Naive thymus-derived CD4-positive, alpha-beta T cell (primary cell): ENCODE measurements at regions of chr15 and their contacts with region 1.

Region 1: DNA sequence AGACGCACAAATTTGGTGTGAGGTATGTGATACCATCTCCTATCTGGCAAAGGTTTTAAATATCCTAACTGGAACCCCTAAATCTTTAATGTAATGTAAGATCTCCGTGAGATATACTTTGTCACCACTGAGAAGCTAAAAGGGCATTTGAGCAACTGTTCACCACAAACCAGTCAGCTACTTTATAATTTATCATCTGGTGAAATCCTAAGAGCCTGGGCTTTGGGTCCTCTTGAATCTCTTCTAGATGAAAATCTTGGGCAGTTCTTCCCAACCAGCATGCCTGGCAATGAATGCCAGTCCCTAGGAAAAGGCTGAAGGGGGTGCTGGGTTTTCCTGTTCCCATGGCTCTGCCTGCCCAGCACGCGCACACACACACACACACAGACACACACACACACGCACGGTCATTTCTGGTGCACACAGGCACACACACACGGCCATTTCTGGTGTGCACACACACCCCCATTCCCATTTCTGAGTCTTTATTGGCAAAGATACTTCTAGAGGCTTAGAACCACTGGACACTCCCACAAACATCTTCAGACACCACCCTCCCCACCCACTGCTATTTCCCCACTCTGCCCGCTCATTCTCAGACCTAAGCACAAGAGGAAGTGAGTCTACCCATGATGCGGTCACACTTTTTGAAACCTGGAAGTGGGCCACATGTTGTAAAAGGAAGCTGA is 72.6 kb downstream of the MYO1E start:
- DNase-seq: peak; percentile 17 to 74 (median 66)
- ATAC-seq: peak; percentile 97
- H3K4me3 ChIP-seq: peak overlapping the region; percentile 36
- H3K4me3 Mint-ChIP-seq: peak overlapping the region; percentile 63 to 87 (median 73)
- H3K27ac ChIP-seq: no peak overlapping the region
- H3K27ac Mint-ChIP-seq: peak overlapping the region; percentile 8 to 85 (median 74)
- H3K4me1 ChIP-seq: peaks cover 14 to 24% of the 10 kb centered on the region in 2 donors
- H3K4me1 Mint-ChIP-seq: peaks cover 19 to 65% (median 38%) of the 10 kb centered on the region in 7 donors
- H3K27me3 ChIP-seq: no peaks in the 10 kb centered on the region
- H3K27me3 Mint-ChIP-seq: no peaks in the 10 kb centered on the region

Region 2: DNA sequence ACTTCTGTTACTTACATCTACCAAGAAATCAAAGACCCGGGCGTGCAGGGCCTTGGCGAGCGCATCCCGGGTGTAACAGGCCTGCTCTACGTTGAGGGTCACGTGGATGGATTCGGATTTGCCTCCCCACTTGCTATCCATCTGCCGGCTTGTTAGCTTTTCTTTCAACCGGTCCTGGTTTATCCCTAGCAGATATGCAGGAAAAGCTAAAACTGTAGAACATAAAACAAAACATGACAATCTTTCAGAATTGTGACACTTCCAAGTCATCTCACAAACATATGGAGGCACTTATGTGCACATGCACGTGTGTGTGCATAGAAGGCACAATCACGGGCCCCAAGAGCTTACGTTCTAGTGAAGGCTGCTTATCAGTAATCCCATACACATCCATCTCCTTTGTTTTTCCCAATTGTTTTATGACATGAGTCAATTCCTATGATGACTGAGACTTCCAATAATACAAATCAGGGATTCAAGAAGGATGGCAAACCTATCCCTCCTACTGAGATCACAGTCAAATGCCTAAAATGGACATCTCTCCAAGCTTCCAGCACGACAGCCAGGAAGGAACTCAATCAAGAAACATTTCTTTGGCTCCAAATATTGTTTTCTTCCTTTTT is 82.1 kb before region 1 on chr15:
- CTCF ChIA-PET with region 1: no interaction called
- POLR2A ChIA-PET with region 1: no interaction called
- intact Hi-C with region 1: no loop called
- DNase-seq: no peak
- ATAC-seq: no peak
- H3K4me3 ChIP-seq: no peak overlapping the region
- H3K4me3 Mint-ChIP-seq: no peak overlapping the region
- H3K27ac ChIP-seq: no peak overlapping the region
- H3K27ac Mint-ChIP-seq: no peak overlapping the region
- H3K4me1 ChIP-seq: no peaks in the 10 kb centered on the region
- H3K4me1 Mint-ChIP-seq: peaks cover 0 to 6% (median 0%) of the 10 kb centered on the region in 7 donors
- H3K27me3 ChIP-seq: no peaks in the 10 kb centered on the region
- H3K27me3 Mint-ChIP-seq: peaks cover 0 to 7% (median 0%) of the 10 kb centered on the region in 5 donors

Region 3: DNA sequence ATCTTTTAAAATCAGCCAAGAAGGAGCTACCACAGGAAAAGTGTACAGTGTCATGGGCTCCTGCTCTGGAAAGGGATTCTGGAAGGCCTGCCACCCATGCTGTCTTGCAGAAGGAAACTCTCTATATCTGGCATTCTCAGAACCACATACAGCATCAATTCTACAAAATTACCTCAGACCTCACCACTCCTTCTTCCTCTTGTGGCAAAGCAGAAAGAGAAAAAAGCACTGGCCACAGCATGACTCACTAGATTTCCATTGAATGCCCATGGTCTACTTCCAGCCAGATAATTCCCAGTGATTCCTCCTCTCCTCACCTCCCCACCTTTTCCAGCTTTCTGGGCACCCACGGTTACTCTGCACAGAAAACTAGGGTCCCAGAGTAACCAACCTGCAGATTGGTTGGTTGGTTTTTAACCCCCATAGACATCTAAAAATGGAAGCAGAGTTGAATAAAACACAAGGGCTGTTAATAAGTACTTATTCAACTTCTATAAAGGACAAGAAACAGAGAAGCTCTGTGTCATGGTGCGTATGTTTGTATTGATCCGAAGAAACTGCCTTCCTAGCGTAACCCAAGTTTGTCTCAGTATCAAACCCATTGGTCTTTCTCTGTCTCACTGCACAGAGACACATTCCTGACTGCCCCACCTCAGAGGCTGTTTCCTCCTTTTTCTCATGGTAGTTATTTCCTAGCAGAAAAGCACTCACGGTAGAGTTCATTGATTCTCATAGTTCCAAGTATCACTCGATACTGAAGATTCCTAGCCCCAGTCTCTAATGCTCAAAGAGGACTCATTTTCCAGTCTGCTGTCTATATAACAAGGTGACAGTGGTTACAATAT is 25.7 kb before region 1 on chr15:
- CTCF ChIA-PET with region 1: no interaction called
- POLR2A ChIA-PET with region 1: no interaction called
- intact Hi-C with region 1: loop called in 1 of 2 experiments (anchors 1 kb)
- DNase-seq: no peak
- ATAC-seq: peak; percentile 40
- H3K4me3 ChIP-seq: no peak overlapping the region
- H3K4me3 Mint-ChIP-seq: peak overlapping the region in 1 of 10 donors; percentile 72
- H3K27ac ChIP-seq: no peak overlapping the region
- H3K27ac Mint-ChIP-seq: peak overlapping the region in 1 of 9 donors; percentile 86
- H3K4me1 ChIP-seq: no peaks in the 10 kb centered on the region
- H3K4me1 Mint-ChIP-seq: peaks cover 0 to 66% (median 0%) of the 10 kb centered on the region in 7 donors
- H3K27me3 ChIP-seq: no peaks in the 10 kb centered on the region
- H3K27me3 Mint-ChIP-seq: peaks cover 0 to 12% (median 0%) of the 10 kb centered on the region in 5 donors

Region 4: GRCh38 chr15:59349680-59350420 is 49.8 kb after region 1 on chr15:
- CTCF ChIA-PET with region 1: no interaction called
- POLR2A ChIA-PET with region 1: no interaction called
- intact Hi-C with region 1: loop called in 1 of 2 experiments (anchors 10 kb)
- DNase-seq: no peak
- ATAC-seq: peak; percentile 68
- H3K4me3 ChIP-seq: no peak overlapping the region
- H3K4me3 Mint-ChIP-seq: peak overlapping the region in 1 of 10 donors; percentile 72
- H3K27ac ChIP-seq: no peak overlapping the region
- H3K27ac Mint-ChIP-seq: peak overlapping the region in 1 of 9 donors; percentile 72
- H3K4me1 ChIP-seq: peaks cover 0 to 10% of the 10 kb centered on the region in 2 donors
- H3K4me1 Mint-ChIP-seq: peaks cover 7 to 54% (median 10%) of the 10 kb centered on the region in 7 donors
- H3K27me3 ChIP-seq: no peaks in the 10 kb centered on the region
- H3K27me3 Mint-ChIP-seq: peaks cover 2 to 12% (median 5%) of the 10 kb centered on the region in 5 donors

Region 5: GRCh38 chr15:59656897-59657634 is 357.0 kb after region 1 on chr15 and contains the start of gene GTF2A2:
- CTCF ChIA-PET with region 1: no interaction called
- POLR2A ChIA-PET with region 1: no interaction called
- intact Hi-C with region 1: no loop called
- DNase-seq: peak; percentile 81 to 95 (median 89)
- ATAC-seq: peak; percentile 99
- H3K4me3 ChIP-seq: peak within 1 kb of the TSS; percentile 77
- H3K4me3 Mint-ChIP-seq: peak within 1 kb of the TSS in 7 of 10 donors; percentile 18 to 52 (median 26)
- H3K27ac ChIP-seq: peak within 1 kb of the TSS; percentile 89
- H3K27ac Mint-ChIP-seq: peak within 1 kb of the TSS in 4 of 9 donors; percentile 76 to 88 (median 78)
- H3K4me1 ChIP-seq: peaks cover 18% of the 10 kb centered on the region in 2 donors
- H3K4me1 Mint-ChIP-seq: peaks cover 4 to 17% (median 11%) of the 10 kb centered on the region in 7 donors
- H3K27me3 ChIP-seq: no peaks in the 10 kb centered on the region
- H3K27me3 Mint-ChIP-seq: no peaks in the 10 kb centered on the region
- total RNA-seq, gene GTF2A2: 46.6 to 124 (median 50.1) TPM